Ascending aorta (tissue), 2 donors: ENCODE measurements at regions of chr16 and their contacts with region 1.

Region 1: GRCh38 chr16:788394-789126 is at the start of gene CHTF18:
- DNase-seq: peak; percentile 63 to 95
- H3K4me3 ChIP-seq: peak within 1 kb of the TSS; percentile 92 to 99
- H3K27ac ChIP-seq: peak within 1 kb of the TSS; percentile 21 to 49
- H3K4me1 ChIP-seq: peaks cover 7 to 17% of the 10 kb centered on the region in 2 donors
- H3K27me3 ChIP-seq: no peaks in the 10 kb centered on the region
- CTCF ChIP-seq: no peak
- total RNA-seq, gene CHTF18: 19.9 TPM

Region 2: DNA sequence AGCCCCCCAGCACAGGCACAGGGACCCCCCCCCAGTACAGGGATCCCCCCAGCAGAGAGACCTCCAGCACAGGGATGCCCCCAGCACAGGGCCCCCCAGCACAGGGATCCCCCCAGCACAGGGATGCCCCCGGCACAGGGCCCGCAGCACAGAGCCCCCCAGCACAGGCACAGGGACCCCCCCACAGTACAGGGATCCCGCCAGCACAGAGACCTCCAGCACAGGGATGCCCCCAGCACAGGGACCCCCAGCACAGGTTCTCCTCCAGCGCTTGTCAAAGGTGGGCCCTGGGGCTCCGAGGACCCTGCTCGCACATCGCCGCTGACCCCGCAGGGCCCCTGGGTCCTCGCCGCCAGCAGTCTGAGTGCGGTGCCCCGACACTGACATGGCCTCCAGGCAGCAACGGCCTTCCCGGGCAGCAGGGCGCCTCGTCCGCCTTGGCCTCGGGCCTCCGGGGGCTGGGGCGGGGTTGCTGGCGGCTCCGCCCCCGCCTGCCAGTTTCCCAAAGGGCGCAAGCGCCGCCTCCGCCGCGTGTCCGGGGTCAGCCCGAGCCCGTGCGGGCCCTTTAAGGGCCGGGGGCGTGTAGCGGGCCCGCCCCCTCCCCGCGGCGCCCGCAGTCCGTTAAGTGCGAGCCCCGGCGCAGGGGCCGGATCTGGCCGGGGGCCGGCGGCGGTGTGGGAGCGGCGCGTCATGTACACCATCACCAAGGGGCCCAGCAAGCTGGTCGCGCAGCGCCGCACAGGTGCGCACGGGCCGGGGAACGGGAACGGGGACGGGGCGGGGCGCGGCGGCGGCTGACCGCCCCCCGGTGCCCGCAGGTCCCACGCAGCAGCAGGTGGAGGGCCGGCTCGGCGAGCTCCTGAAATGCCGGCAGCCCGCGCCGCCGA is 147.0 kb before region 1 on chr16 and contains the start of gene MCRIP2:
- intact Hi-C with region 1: no loop called
- DNase-seq: peak in 1 of 2 donors; percentile 90
- H3K4me3 ChIP-seq: peak within 1 kb of the TSS; percentile 86 to 92
- H3K27ac ChIP-seq: peak within 1 kb of the TSS; percentile 52 to 72
- H3K4me1 ChIP-seq: peaks cover 6 to 18% of the 10 kb centered on the region in 2 donors
- H3K27me3 ChIP-seq: no peaks in the 10 kb centered on the region
- CTCF ChIP-seq: no peak
- total RNA-seq, gene MCRIP2: 92.9 TPM

Region 3: GRCh38 chr16:714558-715476 is 73.7 kb before region 1 on chr16 and contains the start of gene METRN:
- intact Hi-C with region 1: loop called (anchors 1 kb)
- DNase-seq: peak; percentile 39 to 95
- H3K4me3 ChIP-seq: peak within 1 kb of the TSS; percentile 76 to 93
- H3K27ac ChIP-seq: no peak within 1 kb of the TSS
- H3K4me1 ChIP-seq: peaks cover 11 to 20% of the 10 kb centered on the region in 2 donors
- H3K27me3 ChIP-seq: peaks cover 6% of the 10 kb centered on the region
- CTCF ChIP-seq: no peak
- total RNA-seq, gene METRN: 118 TPM

Region 4: GRCh38 chr16:740764-741505 is 47.6 kb before region 1 on chr16 and contains the start of gene CIAO3:
- intact Hi-C with region 1: loop called (anchors 2 kb)
- DNase-seq: peak; percentile 53 to 91
- H3K4me3 ChIP-seq: peak within 1 kb of the TSS; percentile 79 to 90
- H3K27ac ChIP-seq: peak within 1 kb of the TSS; percentile 39 to 46
- H3K4me1 ChIP-seq: peaks cover 4 to 17% of the 10 kb centered on the region in 2 donors
- H3K27me3 ChIP-seq: no peaks in the 10 kb centered on the region
- CTCF ChIP-seq: peak; percentile 91 to 98 (median 93)
- total RNA-seq, gene CIAO3: 103 TPM

Region 5: DNA sequence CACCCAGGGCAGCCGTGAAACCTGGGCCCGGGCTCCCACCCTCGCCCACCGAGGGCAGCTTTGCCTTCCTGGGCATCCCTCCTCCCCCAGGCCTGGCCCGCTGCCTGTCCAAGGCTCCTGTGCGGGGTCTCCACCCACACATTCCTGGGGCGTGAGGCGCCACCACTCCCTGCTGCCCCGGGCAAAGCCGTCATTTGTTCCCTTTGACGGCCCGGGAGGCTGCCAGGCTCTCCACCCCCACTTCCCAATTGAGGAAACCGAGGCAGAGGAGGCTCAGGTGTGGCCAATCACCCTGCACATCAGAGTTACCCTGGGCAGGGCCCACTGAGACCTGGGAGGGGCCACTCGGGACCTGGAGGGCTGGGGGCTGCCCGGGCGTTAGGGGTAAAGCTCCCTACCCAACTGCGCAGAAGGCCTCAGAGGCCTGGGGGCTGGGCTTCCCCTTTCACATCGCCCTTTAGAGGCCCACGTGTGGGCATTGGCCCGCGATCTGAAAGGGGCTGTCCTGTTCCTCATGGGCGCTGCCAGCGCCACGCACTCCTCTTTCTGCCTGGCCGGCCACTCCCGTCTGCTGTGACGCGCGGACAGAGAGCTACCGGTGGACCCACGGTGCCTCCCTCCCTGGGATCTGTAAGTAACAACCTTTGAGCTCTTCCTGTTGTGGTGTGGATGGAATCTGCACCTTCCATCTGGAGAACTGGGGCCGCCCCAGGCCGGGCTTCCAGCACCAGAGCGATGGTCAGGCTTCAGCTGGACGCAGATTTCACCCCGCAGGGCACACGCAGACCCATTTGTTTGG is 27.8 kb before region 1 on chr16 and contains the start of gene MSLN:
- intact Hi-C with region 1: no loop called
- DNase-seq: no peak
- H3K4me3 ChIP-seq: no peak within 1 kb of the TSS
- H3K27ac ChIP-seq: no peak within 1 kb of the TSS
- H3K4me1 ChIP-seq: no peaks in the 10 kb centered on the region
- H3K27me3 ChIP-seq: no peaks in the 10 kb centered on the region
- CTCF ChIP-seq: no peak
- total RNA-seq, gene MSLN: 1.7 TPM

Region 6: GRCh38 chr16:807347-808084 is 19.0 kb after region 1 on chr16:
- intact Hi-C with region 1: loop called (anchors 1 kb)
- DNase-seq: peak; percentile 75 to 95
- H3K4me3 ChIP-seq: peak overlapping the region; percentile 66 to 99
- H3K27ac ChIP-seq: peak overlapping the region; percentile 87 to 90
- H3K4me1 ChIP-seq: peaks cover 12 to 14% of the 10 kb centered on the region in 2 donors
- H3K27me3 ChIP-seq: no peaks in the 10 kb centered on the region
- CTCF ChIP-seq: no peak

Region 7: GRCh38 chr16:1564325-1564724 is 775.8 kb after region 1 on chr16:
- intact Hi-C with region 1: no loop called
- DNase-seq: no peak
- H3K4me3 ChIP-seq: no peak overlapping the region
- H3K27ac ChIP-seq: no peak overlapping the region
- H3K4me1 ChIP-seq: no peaks in the 10 kb centered on the region
- H3K27me3 ChIP-seq: no peaks in the 10 kb centered on the region
- CTCF ChIP-seq: peak in 1 of 3 experiments; percentile 15

Region 8: GRCh38 chr16:1620391-1620790 is 831.8 kb after region 1 on chr16:
- intact Hi-C with region 1: no loop called
- DNase-seq: no peak
- H3K4me3 ChIP-seq: no peak overlapping the region
- H3K27ac ChIP-seq: no peak overlapping the region
- H3K4me1 ChIP-seq: peaks cover 2 to 10% of the 10 kb centered on the region in 2 donors
- H3K27me3 ChIP-seq: no peaks in the 10 kb centered on the region
- CTCF ChIP-seq: no peak